Heart right ventricle (tissue), 16 donors: ENCODE measurements at regions of chr5 and their contacts with region 1.

Region 1: GRCh38 chr5:72138943-72139521 is 31.8 kb downstream of the MAP1B start:
- DNase-seq: no peak
- ATAC-seq: peak in 5 of 8 donors; percentile 10 to 44 (median 34)
- H3K4me3 ChIP-seq: no peak overlapping the region
- H3K27ac ChIP-seq: peak overlapping the region in 8 of 10 donors; percentile 1 to 38 (median 18)
- H3K4me1 ChIP-seq: peaks cover 0 to 78% (median 46%) of the 10 kb centered on the region in 9 donors
- H3K27me3 ChIP-seq: peaks cover 0 to 12% (median 0%) of the 10 kb centered on the region in 7 donors
- CTCF ChIP-seq: no peak

Region 2: GRCh38 chr5:72185496-72186329 is 46.7 kb after region 1 on chr5:
- intact Hi-C with region 1: loop called in 1 of 10 experiments (anchors 5 kb)
- DNase-seq: no peak
- ATAC-seq: peak in 7 of 8 donors; percentile 46 to 85 (median 76)
- H3K4me3 ChIP-seq: no peak overlapping the region
- H3K27ac ChIP-seq: peak overlapping the region in 3 of 10 donors; percentile 11 to 29 (median 15)
- H3K4me1 ChIP-seq: peaks cover 8 to 32% (median 13%) of the 10 kb centered on the region in 9 donors
- H3K27me3 ChIP-seq: no peaks in the 10 kb centered on the region
- CTCF ChIP-seq: no peak

Region 3: DNA sequence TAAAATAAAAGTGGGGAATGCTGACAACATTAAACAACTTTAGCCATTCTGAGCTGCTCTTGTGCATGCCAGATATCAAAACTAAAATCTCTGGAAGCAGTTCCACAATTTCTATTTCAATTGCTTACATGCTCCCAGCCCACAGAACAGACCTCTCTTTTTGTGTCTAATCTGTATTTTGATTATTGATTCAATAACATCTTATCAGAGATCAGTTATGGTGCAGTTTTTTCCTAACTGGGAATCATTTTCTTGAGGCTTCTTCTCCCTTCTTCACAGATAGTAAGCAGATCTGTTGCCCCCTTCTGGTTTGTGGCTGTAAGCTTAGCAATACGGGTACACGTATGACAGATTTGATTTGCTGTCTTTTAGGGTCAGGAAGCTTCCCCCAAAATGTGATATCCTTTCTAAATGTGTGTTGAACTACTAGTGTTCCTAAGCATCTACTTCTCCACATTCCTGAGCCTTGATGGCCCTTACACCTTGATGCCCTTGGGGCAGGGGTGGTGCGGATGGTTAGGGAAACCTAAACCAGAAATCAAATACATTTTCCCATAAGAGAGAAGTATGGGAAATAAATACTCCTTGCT is 141.6 kb after region 1 on chr5:
- intact Hi-C with region 1: loop called in 1 of 10 experiments (anchors 10 kb)
- DNase-seq: no peak
- ATAC-seq: peak in 2 of 8 donors; percentile 56
- H3K4me3 ChIP-seq: no peak overlapping the region
- H3K27ac ChIP-seq: peak overlapping the region in 8 of 10 donors; percentile 35 to 73 (median 64)
- H3K4me1 ChIP-seq: peaks cover 11 to 46% (median 34%) of the 10 kb centered on the region in 9 donors
- H3K27me3 ChIP-seq: no peaks in the 10 kb centered on the region
- CTCF ChIP-seq: peak in 7 of 9 donors; percentile 40 to 61 (median 48)

Region 4: GRCh38 chr5:72314571-72315172 is 175.6 kb after region 1 on chr5:
- intact Hi-C with region 1: loop called in 8 of 10 experiments (anchors 2 to 10 kb)
- DNase-seq: peak in 1 of 2 donors; percentile 63
- ATAC-seq: peak in 7 of 8 donors; percentile 60 to 80 (median 75)
- H3K4me3 ChIP-seq: no peak overlapping the region
- H3K27ac ChIP-seq: no peak overlapping the region
- H3K4me1 ChIP-seq: peaks cover 0 to 31% (median 21%) of the 10 kb centered on the region in 9 donors
- H3K27me3 ChIP-seq: no peaks in the 10 kb centered on the region
- CTCF ChIP-seq: peak in 5 of 9 donors; percentile 17 to 42 (median 37)

Region 5: GRCh38 chr5:72441861-72442540 is 303.0 kb after region 1 on chr5:
- intact Hi-C with region 1: no loop called
- DNase-seq: no peak
- ATAC-seq: peak in 1 of 8 donors; percentile 41
- H3K4me3 ChIP-seq: no peak overlapping the region
- H3K27ac ChIP-seq: peak overlapping the region in 4 of 10 donors; percentile 27 to 70 (median 42)
- H3K4me1 ChIP-seq: peaks cover 0 to 58% (median 27%) of the 10 kb centered on the region in 9 donors
- H3K27me3 ChIP-seq: no peaks in the 10 kb centered on the region
- CTCF ChIP-seq: no peak